Astrocyte of the cerebellum (primary cell): ENCODE measurements at regions of chr20 and their contacts with region 1.

Region 1: DNA sequence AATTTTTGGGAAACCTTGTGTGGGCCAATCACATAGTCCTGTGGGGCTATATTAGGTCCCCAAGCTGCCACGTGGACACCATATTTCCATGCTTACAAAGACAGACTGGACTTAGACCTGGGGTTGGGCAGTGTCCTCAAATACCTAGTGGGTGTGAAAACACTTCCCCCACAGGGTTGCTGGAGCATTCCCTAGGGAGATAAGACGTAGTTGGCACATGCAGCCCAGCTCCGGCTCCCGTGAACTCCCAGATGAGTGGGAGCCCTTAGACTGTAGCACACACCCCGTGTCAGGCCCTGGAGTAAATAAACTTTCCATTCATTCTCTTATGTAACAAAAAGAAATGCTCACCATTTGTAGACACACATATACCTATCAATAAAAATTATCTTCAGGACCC is 14.2 kb downstream of the KCNG1 start:
- DNase-seq: no peak
- H3K4me3 ChIP-seq: no peak overlapping the region
- CTCF ChIP-seq: no peak

Region 2: DNA sequence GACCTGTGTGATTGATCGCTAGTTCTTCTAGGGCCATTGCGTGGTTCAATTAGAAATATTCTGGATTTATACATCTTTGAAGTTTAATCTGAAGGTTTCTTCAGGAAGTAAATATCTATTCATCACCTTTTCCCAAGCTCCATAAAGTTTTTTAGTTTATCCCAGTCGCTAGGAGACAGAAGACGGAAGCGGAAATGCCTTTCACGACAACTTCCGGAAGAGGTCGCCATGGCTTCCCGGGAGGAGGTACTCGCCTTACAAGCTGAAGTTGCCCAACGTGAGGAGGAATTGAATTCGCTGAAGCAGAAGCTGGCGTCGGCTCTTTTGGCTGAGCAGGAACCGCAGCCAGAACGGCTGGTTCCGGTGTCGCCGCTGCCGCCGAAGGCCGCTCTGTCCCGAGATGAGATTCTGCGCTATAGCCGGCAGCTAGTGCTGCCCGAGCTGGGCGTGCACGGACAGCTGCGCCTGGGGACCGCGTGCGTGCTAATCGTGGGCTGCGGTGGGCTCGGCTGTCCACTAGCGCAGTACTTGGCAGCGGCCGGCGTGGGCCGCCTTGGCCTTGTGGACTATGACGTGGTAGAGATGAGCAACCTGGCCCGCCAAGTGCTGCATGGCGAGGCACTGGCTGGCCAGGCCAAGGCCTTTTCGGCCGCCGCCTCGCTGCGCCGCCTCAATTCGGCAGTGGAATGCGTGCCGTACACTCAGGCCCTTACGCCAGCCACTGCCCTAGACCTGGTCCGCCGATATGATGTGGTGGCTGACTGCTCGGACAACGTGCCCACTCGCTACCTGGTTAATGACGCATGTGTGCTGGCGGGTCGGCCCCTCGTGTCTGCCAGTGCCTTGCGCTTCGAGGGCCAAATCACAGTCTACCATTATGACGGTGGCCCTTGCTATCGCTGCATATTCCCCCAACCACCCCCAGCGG is 49.8 kb before region 1 on chr20 and contains the start of gene MOCS3:
- in situ Hi-C with region 1: no loop called
- DNase-seq: peak; percentile 87
- H3K4me3 ChIP-seq: peak within 1 kb of the TSS; percentile 95
- CTCF ChIP-seq: no peak

Region 3: DNA sequence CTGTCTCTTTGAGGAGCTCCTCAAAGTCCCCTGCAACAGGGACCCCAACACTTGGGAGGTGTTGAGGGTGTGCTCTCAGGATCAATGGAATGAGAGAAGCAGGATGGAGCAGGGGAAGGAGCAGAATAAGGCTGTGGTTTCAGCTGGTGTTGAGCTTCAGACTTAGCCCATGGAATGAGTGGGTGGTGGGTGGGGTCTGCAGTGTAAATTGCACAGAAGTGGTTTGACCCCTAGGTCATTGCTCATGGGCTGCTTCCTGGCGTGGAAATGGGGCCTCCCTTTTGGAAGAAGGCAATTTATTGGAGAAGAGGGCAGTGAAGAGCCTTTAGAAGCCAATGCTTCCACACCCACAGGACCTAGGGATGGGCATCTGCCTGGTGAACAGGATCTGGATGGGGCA is 51.1 kb after region 1 on chr20:
- in situ Hi-C with region 1: loop called (anchors 5 kb)
- DNase-seq: no peak
- H3K4me3 ChIP-seq: no peak overlapping the region
- CTCF ChIP-seq: no peak

Region 4: GRCh38 chr20:51095633-51096513 is 87.2 kb after region 1 on chr20:
- in situ Hi-C with region 1: no loop called
- DNase-seq: no peak
- H3K4me3 ChIP-seq: no peak overlapping the region
- CTCF ChIP-seq: no peak

Region 5: GRCh38 chr20:51326201-51326819 is 317.6 kb after region 1 on chr20:
- in situ Hi-C with region 1: loop called (anchors 5 kb)
- DNase-seq: no peak
- H3K4me3 ChIP-seq: no peak overlapping the region
- CTCF ChIP-seq: peak; percentile 56